Ovary (tissue), 10 donors: ENCODE measurements at regions of chr19 and their contacts with region 1.

Region 1: GRCh38 chr19:34336781-34337271 is 28.2 kb upstream of the GPI start:
- DNase-seq: no peak
- H3K4me3 ChIP-seq: no peak overlapping the region
- H3K27ac ChIP-seq: no peak overlapping the region
- H3K4me1 ChIP-seq: no peaks in the 10 kb centered on the region
- H3K27me3 ChIP-seq: no peaks in the 10 kb centered on the region
- CTCF ChIP-seq: peak; percentile 43 to 53 (median 52)
- EP300 ChIP-seq: no peak
- POLR2A ChIP-seq: no peak

Region 2: GRCh38 chr19:34171877-34172660 is 164.8 kb before region 1 on chr19 and contains the start of gene LSM14A:
- intact Hi-C with region 1: loop called in 1 of 4 experiments (anchors 5 kb)
- DNase-seq: peak; percentile 92 to 96 (median 95)
- H3K4me3 ChIP-seq: peak within 1 kb of the TSS; percentile 63
- H3K27ac ChIP-seq: peak within 1 kb of the TSS; percentile 89 to 99
- H3K4me1 ChIP-seq: peaks cover 9% of the 10 kb centered on the region
- H3K27me3 ChIP-seq: no peaks in the 10 kb centered on the region
- CTCF ChIP-seq: no peak
- EP300 ChIP-seq: no peak
- POLR2A ChIP-seq: peak; percentile 84
- total RNA-seq, gene LSM14A: 85.8 to 130 (median 116) TPM

Region 3: GRCh38 chr19:34461375-34462100 is 124.7 kb after region 1 on chr19:
- intact Hi-C with region 1: no loop called
- DNase-seq: no peak
- H3K4me3 ChIP-seq: no peak overlapping the region
- H3K27ac ChIP-seq: peak overlapping the region in 1 of 2 donors; percentile 30
- H3K4me1 ChIP-seq: peaks cover 11% of the 10 kb centered on the region
- H3K27me3 ChIP-seq: no peaks in the 10 kb centered on the region
- CTCF ChIP-seq: no peak
- EP300 ChIP-seq: no peak
- POLR2A ChIP-seq: no peak